Heart left ventricle (tissue), 16 donors: ENCODE measurements at regions of chr7 and their contacts with region 1.

Region 1: DNA sequence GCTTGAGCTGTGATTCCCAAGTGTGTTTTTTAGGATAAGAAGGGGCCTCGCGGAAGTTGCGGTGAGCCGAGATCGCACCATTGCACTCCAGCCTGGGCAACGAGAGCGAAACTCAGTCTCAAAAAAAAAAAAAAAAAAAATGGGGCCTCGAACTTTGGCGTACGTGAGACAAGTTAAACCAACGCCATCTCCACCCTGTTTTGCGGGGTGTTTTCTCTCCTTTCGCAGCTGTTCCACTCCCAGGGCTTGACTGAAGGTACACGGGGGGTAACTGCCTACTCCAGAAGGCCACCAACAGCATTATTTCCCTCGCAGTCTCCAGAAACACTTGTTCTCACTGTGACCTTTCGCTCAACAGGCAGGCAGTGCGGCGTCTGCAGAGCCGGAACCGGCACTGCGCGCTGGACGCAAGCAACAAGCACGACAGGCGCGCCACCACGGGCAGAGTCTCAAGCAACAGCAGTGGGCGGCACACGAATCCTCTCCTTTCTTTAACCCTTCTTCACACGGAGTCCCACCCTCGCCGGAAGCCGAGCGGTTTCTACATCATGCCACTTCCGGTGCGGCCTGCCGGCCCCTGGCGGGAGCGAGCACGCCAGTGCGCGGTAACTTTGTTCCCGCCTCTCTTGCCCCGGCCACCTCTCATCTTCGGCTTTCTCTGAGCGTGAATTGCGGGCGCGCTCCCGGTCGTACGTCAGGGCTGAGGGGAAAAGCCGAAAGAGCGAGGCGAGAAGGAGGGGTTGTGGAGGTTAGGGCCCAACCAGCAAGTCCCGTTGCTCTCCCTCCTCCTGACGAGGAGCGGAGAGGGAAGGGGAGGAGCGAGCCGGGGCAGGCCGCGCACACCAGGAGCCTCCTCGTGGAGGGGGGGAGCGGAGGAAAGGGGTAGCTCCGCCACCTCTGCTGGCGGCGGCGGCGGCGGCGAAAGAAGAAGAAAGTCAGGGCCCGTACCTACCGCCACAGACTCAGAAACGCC is 814 bp upstream of the CDK13 start:
- DNase-seq: peak; percentile 99
- ATAC-seq: peak; percentile 92 to 95 (median 94)
- H3K4me3 ChIP-seq: peak overlapping the region; percentile 58 to 99 (median 85)
- H3K27ac ChIP-seq: peak overlapping the region; percentile 92 to 100 (median 98)
- H3K4me1 ChIP-seq: peaks cover 7 to 32% (median 15%) of the 10 kb centered on the region in 12 donors
- H3K27me3 ChIP-seq: no peaks in the 10 kb centered on the region
- CTCF ChIP-seq: peak in 3 of 12 donors; percentile 2 to 20 (median 9)
- POLR2A ChIP-seq: peak in 1 of 2 donors; percentile 72

Region 2: DNA sequence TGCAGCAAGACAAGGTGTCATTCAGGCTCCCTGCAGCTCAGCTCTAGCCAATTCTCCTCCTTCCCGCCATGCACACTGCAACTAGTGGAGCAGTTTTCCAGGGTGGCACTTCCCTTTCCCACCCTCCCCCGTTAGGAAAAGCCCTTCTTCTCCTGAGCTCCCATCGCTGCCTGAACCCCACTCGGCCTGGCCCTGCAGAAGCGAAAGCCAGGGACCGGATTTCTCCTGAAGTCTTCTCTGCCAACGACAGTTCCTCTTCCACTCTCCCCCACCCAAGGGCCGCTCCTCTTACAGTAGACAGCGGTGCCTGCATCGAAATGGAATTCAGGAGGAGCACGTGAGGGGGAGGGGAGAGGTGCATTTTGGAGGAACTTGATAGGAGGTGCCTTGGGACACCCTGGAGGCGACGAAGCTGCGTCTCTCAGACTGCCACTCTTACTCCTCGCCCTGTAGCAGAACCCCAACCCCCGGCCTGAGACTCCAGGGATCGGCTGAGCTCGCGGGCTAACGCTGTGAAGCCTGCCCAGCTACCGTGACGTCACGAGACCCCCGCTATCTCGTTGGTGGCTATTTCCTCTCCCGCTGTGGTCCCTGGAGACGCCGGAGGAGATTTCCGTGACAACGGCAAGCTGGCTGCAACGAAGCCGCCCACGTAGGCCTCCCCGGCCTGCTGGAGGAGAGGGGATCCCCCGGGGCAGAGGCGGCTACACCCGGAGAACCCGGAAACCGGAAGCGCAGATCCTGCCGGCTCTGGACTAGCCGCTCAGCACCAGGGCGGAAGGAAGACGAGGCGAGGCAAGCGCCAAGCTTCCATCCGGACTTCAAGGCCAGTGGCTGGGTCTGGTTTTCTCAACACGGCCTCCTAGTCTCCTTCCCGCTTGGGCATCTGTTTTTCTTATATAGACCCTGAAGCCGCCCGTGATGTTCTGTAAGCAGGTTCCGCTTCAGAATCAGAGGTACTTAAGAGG is 216.1 kb before region 1 on chr7:
- intact Hi-C with region 1: loop called in 1 of 10 experiments (anchors 10 kb)
- DNase-seq: peak; percentile 97 to 98 (median 98)
- ATAC-seq: peak; percentile 95 to 98 (median 97)
- H3K4me3 ChIP-seq: peak overlapping the region; percentile 8 to 72 (median 60)
- H3K27ac ChIP-seq: peak overlapping the region in 11 of 12 donors; percentile 41 to 90 (median 76)
- H3K4me1 ChIP-seq: peaks cover 0 to 40% (median 21%) of the 10 kb centered on the region in 12 donors
- H3K27me3 ChIP-seq: no peaks in the 10 kb centered on the region
- CTCF ChIP-seq: no peak
- POLR2A ChIP-seq: peak in 1 of 2 donors; percentile 13

Region 3: DNA sequence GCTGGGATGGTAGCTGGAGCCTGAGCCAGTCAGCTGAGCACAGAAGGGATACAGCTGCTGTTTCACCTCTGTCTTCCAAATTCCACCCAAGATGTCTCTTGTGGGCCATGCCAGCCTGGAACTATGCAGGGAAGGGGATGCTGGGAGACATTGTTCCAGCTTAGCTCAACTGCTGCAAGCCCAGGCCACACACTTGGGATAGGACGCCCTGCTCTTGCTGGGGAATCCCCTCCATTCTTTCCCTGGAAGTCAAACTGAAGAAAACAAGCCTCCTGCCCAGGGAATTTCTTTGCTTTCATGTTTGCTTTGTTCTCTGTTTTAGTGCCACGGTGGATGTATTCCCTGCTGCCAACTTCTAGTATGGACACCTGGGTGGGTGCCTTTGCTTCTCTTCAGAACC is 54.3 kb before region 1 on chr7:
- intact Hi-C with region 1: loop called in 6 of 10 experiments (anchors 2 to 5 kb)
- DNase-seq: no peak
- ATAC-seq: no peak
- H3K4me3 ChIP-seq: no peak overlapping the region
- H3K27ac ChIP-seq: no peak overlapping the region
- H3K4me1 ChIP-seq: peaks cover 0 to 12% (median 0%) of the 10 kb centered on the region in 12 donors
- H3K27me3 ChIP-seq: peaks cover 0 to 2% (median 0%) of the 10 kb centered on the region in 9 donors
- CTCF ChIP-seq: no peak
- POLR2A ChIP-seq: no peak

Region 4: DNA sequence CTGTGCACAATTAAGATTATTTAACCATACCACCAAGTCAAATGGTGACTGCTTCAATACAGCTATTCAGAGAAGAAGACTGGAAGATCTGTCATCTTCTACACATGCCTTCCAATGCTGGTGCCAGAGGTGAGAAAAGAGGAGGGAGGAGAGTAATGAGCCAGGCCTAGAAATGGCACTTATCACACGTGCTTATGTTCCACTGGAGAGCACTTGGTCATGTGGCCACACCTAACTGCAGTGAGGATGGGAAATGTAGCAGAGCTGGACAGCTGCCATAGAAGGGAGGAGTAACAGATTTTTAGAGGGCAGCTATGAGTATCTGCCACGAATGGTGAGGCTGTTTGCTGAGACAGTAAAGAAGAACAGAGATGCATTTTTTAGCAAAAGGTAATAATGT is 108.0 kb after region 1 on chr7:
- intact Hi-C with region 1: loop called (anchors 2 to 10 kb)
- DNase-seq: peak in 4 of 5 donors; percentile 32 to 63 (median 42)
- ATAC-seq: peak; percentile 27 to 90 (median 76)
- H3K4me3 ChIP-seq: no peak overlapping the region
- H3K27ac ChIP-seq: no peak overlapping the region
- H3K4me1 ChIP-seq: peaks cover 0 to 28% (median 4%) of the 10 kb centered on the region in 12 donors
- H3K27me3 ChIP-seq: no peaks in the 10 kb centered on the region
- CTCF ChIP-seq: no peak
- POLR2A ChIP-seq: no peak

Region 5: GRCh38 chr7:40134428-40135316 is 185.4 kb after region 1 on chr7 and contains the starts of genes MPLKIP and SUGCT:
- intact Hi-C with region 1: loop called in 4 of 10 experiments (anchors 1 to 10 kb)
- DNase-seq: peak; percentile 83 to 91 (median 87)
- ATAC-seq: peak; percentile 92 to 97 (median 96)
- H3K4me3 ChIP-seq: peak within 1 kb of the TSS; percentile 69 to 100 (median 94)
- H3K27ac ChIP-seq: peak within 1 kb of the TSS; percentile 82 to 98 (median 94)
- H3K4me1 ChIP-seq: peaks cover 5 to 35% (median 24%) of the 10 kb centered on the region in 12 donors
- H3K27me3 ChIP-seq: no peaks in the 10 kb centered on the region
- CTCF ChIP-seq: peak; percentile 94 to 100 (median 99)
- POLR2A ChIP-seq: peak in 1 of 2 donors; percentile 27
- total RNA-seq, gene MPLKIP: 12.0 to 19.3 (median 15.6) TPM
- total RNA-seq, gene SUGCT: 2.9 to 7.6 (median 5.2) TPM